CD14-positive monocyte (primary cell): ENCODE measurements at regions of chr4 and their contacts with region 1.

Region 1: GRCh38 chr4:15238720-15239119 is 189.1 kb upstream of the C1QTNF7 start:
- DNase-seq: peak; percentile 45 to 66 (median 65)
- H3K4me3 ChIP-seq: no peak overlapping the region
- H3K4me3 Mint-ChIP-seq: no peak overlapping the region
- H3K27ac ChIP-seq: no peak overlapping the region
- H3K27ac Mint-ChIP-seq: no peak overlapping the region
- H3K4me1 ChIP-seq: peaks cover 11 to 13% of the 10 kb centered on the region in 2 donors
- H3K4me1 Mint-ChIP-seq: peaks cover 17% of the 10 kb centered on the region
- H3K27me3 ChIP-seq: no peaks in the 10 kb centered on the region
- H3K27me3 Mint-ChIP-seq: no peaks in the 10 kb centered on the region
- CTCF ChIP-seq: peak; percentile 84

Region 2: GRCh38 chr4:15396157-15396800 is 157.6 kb after region 1 on chr4:
- intact Hi-C with region 1: loop called (anchors 5 kb)
- DNase-seq: peak in 2 of 3 donors; percentile 58 to 73
- H3K4me3 ChIP-seq: no peak overlapping the region
- H3K4me3 Mint-ChIP-seq: no peak overlapping the region
- H3K27ac ChIP-seq: no peak overlapping the region
- H3K27ac Mint-ChIP-seq: no peak overlapping the region
- H3K4me1 ChIP-seq: peaks cover 31 to 36% of the 10 kb centered on the region in 2 donors
- H3K4me1 Mint-ChIP-seq: peaks cover 45% of the 10 kb centered on the region
- H3K27me3 ChIP-seq: no peaks in the 10 kb centered on the region
- H3K27me3 Mint-ChIP-seq: peaks cover 0 to 2% (median 0%) of the 10 kb centered on the region in 3 donors
- CTCF ChIP-seq: peak; percentile 92

Region 3: DNA sequence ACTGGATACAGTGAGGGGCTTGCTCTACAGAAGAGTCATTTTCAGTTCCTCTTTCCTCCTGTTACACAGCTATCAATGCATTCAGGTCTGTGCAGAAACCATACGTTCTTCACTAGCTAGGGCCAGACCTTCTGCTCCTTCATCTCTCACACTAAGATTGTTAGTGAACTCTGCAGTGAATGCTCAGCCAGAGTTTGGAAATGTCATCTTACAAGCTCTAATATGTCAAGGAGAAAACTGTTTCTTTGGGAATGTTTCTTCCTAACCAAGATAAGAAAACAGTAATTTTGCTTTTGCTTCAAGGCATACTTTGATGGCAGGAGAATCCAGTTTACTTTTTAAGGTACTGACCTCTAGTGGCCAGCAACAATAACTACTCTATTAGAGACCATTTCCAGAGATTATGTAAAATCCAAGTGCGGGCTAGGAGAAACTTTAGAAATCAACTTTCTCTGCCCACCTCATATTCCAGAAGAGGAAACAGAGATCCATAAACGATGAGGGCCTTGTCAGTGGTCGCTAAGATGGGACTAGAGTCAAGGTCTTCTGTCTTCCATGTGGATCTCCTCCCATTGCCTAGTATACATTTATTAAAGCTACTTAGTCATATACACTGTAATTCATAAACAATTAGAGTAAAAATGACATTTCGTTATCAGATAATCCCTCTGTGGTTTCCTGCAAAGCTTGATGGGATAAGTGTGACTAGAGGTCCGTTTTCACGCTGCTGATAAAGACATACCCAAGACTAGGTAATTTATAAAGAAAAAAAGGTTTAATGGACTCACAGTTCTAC is 218.9 kb after region 1 on chr4:
- intact Hi-C with region 1: loop called (anchors 1 to 5 kb)
- DNase-seq: peak; percentile 31 to 63 (median 57)
- H3K4me3 ChIP-seq: peak overlapping the region in 1 of 3 experiments; percentile 50
- H3K4me3 Mint-ChIP-seq: peak overlapping the region in 1 of 2 donors; percentile 59
- H3K27ac ChIP-seq: peak overlapping the region in 1 of 2 donors; percentile 56
- H3K27ac Mint-ChIP-seq: peak overlapping the region in 5 of 7 donors; percentile 12 to 71 (median 56)
- H3K4me1 ChIP-seq: peaks cover 36% of the 10 kb centered on the region in 2 donors
- H3K4me1 Mint-ChIP-seq: peaks cover 39% of the 10 kb centered on the region
- H3K27me3 ChIP-seq: no peaks in the 10 kb centered on the region
- H3K27me3 Mint-ChIP-seq: no peaks in the 10 kb centered on the region
- CTCF ChIP-seq: peak; percentile 84

Region 4: DNA sequence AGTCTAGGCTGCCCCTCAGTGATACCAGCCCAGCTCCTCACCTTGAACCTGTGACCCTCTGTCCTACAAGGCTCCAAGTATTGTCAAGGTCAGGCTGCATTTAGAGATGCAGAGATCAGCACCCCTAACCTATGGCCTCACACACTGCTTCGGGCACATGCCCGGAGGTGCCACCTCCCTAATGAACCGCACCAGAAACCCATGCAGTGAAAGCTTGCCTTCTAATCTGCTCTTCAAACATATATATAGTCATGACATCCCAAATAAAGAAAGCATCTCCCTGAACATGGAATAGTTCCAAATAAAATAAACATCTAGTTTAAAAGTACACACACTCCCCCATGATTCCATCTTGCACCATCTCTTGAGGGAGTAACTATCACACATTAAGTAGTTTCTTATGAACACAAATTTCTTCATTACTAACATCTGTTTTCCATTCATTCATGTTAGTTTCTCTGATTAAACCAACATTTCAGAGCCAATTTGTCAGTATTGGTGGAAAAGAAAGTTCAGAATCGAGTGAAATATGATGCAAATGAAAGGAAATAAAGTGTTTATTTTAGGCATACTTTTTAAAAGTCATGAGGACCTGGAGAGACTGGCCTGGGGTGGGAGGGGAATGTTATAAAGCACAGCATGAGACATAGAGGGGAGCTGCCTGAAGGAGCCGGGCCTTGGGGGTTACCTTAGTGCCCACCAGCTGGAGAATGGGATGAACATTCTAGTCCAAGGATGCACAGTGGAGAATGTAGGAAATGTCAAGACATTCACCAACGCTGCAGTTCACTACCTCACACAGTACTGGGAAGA is 250.1 kb after region 1 on chr4:
- intact Hi-C with region 1: no loop called
- DNase-seq: no peak
- H3K4me3 ChIP-seq: no peak overlapping the region
- H3K4me3 Mint-ChIP-seq: no peak overlapping the region
- H3K27ac ChIP-seq: no peak overlapping the region
- H3K27ac Mint-ChIP-seq: no peak overlapping the region
- H3K4me1 ChIP-seq: no peaks in the 10 kb centered on the region
- H3K4me1 Mint-ChIP-seq: no peaks in the 10 kb centered on the region
- H3K27me3 ChIP-seq: no peaks in the 10 kb centered on the region
- H3K27me3 Mint-ChIP-seq: peaks cover 0 to 1% (median 0%) of the 10 kb centered on the region in 3 donors
- CTCF ChIP-seq: no peak